ENCODE measurements at regions of chr7 and their contacts with region 1.

Region 1: DNA sequence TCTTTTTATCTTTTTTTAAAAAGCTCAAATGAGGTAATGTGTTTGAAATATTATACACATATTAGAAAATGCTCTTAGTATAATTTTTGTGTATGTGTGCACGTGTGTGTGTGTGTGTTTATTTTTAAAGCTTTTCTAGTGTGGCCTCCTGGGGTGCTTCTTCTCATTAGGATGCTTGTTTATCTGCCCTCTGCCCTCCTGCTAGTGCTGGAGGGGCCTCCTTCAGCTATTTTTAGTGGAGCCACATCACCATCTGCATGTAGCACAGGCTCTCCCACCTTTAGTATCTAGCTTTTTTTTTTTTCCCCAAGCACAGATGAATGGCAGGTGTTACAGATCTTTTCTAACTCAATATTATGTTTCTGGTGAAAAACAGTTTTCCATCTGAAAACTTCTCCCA is 155.7 kb upstream of the TMEM229A start:
- DNase-seq: no peak
- CTCF ChIP-seq: no peak

Region 2: DNA sequence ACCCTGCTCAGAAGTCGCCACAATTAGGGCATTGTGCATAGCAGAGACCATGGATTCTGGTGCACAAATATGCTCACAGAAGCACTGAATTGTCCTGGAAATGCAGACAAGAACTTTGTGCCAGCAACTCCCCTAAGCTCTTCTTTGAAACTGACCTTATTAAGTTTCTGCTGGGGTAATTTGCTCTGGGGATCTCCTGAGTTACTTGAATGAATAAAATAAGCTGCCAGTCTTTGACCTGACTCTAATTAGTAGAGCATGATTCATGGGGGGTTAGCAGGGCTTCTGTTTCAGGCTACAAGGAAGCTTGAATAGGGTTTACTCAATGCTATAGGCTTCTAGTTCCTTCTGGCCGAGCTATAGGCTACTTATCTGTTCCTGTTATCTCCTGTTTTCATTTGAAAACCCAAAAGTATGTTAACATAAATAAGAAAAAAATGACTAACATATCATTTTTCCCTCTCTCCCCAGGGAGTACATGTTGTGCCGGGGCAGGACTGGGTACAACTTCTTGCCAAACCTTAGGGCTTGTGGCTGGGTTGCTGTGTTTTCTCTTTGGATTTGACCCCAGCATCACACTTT is 13.3 kb after region 1 on chr7:
- CTCF ChIA-PET with region 1: interaction called, 11 read pairs
- POLR2A ChIA-PET with region 1: no interaction called
- DNase-seq: no peak
- CTCF ChIP-seq: no peak